ENCODE measurements at regions of chr4 and their contacts with region 1.

Region 1: DNA sequence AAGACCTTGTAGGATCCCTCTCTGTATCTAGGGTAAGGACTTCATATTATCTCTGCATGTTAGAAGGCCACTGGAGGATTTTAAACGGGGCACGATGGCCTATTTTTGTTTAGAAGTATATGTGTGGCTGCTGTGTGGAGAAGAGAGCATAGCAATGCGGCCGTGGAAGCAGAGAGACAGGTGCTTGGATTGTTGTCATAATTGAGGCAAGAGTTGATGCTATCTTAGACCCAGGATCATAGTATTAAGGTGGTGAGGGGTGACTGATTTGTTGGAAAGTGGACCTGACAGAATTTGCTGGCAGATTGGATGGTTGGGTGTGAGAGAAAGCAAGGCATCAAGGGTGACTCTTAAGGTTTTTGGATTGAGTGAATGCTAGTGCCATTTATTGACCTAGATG is 63.4 kb downstream of the CCKAR start:
- DNase-seq: no peak
- H3K4me3 ChIP-seq: no peak overlapping the region
- H3K27ac ChIP-seq: no peak overlapping the region
- H3K4me1 ChIP-seq: peaks cover 0 to under 1% (median 0%) of the 10 kb centered on the region in 4 donors
- H3K27me3 ChIP-seq: no peaks in the 10 kb centered on the region
- CTCF ChIP-seq: no peak
- EP300 ChIP-seq: no peak
- POLR2A ChIP-seq: no peak

Region 2: DNA sequence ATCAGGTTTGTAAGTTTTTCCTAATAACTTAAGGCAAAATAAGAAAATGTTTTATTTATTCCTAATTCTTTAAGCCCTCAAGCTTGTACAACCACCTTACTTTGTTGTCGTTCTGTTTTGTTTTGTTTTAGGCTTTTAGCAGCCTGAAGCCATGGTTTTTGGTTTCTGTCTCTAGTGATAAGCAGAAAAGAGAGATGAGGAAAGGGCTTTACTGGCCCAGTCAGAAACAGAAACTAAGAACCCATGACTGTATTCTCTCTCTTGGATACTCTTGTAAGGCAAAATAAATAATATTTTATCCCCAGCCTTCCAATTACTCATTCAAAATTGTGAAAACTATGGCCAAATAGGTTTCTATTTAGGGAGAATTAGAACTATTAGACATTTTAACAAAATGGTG is 186.3 kb after region 1 on chr4:
- in situ Hi-C with region 1: no loop called
- intact Hi-C with region 1: no loop called
- DNase-seq: no peak
- H3K4me3 ChIP-seq: no peak overlapping the region
- H3K27ac ChIP-seq: no peak overlapping the region
- H3K4me1 ChIP-seq: peaks cover 0 to 3% (median 0%) of the 10 kb centered on the region in 4 donors
- H3K27me3 ChIP-seq: no peaks in the 10 kb centered on the region
- CTCF ChIP-seq: no peak
- EP300 ChIP-seq: no peak
- POLR2A ChIP-seq: no peak

Region 3: GRCh38 chr4:26660261-26660660 is 233.4 kb after region 1 on chr4:
- in situ Hi-C with region 1: no loop called
- intact Hi-C with region 1: loop called (anchors 2 kb)
- DNase-seq: no peak
- H3K4me3 ChIP-seq: no peak overlapping the region
- H3K27ac ChIP-seq: no peak overlapping the region
- H3K4me1 ChIP-seq: no peaks in the 10 kb centered on the region
- H3K27me3 ChIP-seq: no peaks in the 10 kb centered on the region
- CTCF ChIP-seq: no peak
- EP300 ChIP-seq: no peak
- POLR2A ChIP-seq: no peak

Measured in transverse colon (tissue), 4 donors.